ENCODE measurements at regions of chr7 and their contacts with region 1.

Region 1: GRCh38 chr7:132261327-132262159 is 314.7 kb downstream of the PLXNA4 start:
- DNase-seq: no peak
- ATAC-seq: no peak
- H3K4me3 Mint-ChIP-seq: no peak overlapping the region
- H3K27ac Mint-ChIP-seq: no peak overlapping the region
- H3K4me1 Mint-ChIP-seq: no peaks in the 10 kb centered on the region
- H3K27me3 Mint-ChIP-seq: peaks cover 7% of the 10 kb centered on the region

Region 2: DNA sequence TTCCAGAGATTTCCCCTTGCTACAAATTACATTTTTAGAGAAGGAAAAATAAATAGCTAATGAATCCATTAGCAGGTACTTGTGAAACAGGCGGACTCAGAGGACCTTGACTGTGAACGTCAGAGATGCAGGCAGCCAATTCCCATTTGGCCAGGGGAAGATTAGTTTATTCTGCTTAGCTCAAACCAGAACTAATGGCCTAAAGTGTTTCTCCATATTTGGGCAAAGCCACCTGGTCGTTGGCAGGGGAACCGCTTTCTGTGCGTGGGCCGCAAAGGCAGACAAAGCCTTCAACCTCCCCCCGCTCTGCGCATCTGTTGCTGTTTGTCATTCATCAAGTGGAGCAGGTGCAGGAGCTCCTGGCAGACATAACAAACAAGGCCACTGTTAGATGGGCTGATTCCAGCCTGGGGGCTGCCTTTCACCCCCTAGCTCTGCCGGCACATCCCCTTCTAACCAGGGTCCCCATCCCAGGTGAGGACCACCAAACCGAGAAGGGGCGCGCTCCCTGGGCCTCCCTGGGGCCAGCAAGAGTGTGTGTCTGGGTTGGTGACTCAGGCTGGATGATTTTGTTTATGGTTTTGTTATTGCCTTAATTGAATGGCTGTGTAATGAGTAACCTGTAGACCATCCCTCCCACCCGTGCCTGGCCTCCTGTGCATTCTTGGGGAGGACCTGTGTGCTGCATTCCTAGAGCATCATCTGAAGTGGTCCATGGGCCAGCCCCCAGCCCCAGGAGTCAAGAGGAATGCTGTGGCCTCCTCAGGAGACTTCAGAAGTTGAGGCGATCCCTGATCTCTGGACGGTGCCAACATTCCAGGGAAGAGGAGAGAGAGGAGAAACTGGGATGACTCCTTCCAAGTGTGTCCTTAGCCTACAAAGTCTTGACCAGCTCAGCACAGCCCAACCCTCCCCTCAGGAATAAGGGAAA is 1895.8 kb before region 1 on chr7:
- CTCF ChIA-PET with region 1: no interaction called
- POLR2A ChIA-PET with region 1: no interaction called
- intact Hi-C with region 1: no loop called
- DNase-seq: peak; percentile 57
- ATAC-seq: no peak
- H3K4me3 Mint-ChIP-seq: no peak overlapping the region
- H3K27ac Mint-ChIP-seq: no peak overlapping the region
- H3K4me1 Mint-ChIP-seq: peaks cover 43% of the 10 kb centered on the region
- H3K27me3 Mint-ChIP-seq: no peaks in the 10 kb centered on the region

Region 3: GRCh38 chr7:132206594-132206993 is 54.9 kb before region 1 on chr7:
- CTCF ChIA-PET with region 1: no interaction called
- POLR2A ChIA-PET with region 1: no interaction called
- intact Hi-C with region 1: loop called in 1 of 2 experiments (anchors 10 kb)
- DNase-seq: no peak
- ATAC-seq: no peak
- H3K4me3 Mint-ChIP-seq: no peak overlapping the region
- H3K27ac Mint-ChIP-seq: no peak overlapping the region
- H3K4me1 Mint-ChIP-seq: no peaks in the 10 kb centered on the region
- H3K27me3 Mint-ChIP-seq: no peaks in the 10 kb centered on the region